Natural killer cell (primary cell): ENCODE measurements at regions of chr10 and their contacts with region 1.

Region 1: DNA sequence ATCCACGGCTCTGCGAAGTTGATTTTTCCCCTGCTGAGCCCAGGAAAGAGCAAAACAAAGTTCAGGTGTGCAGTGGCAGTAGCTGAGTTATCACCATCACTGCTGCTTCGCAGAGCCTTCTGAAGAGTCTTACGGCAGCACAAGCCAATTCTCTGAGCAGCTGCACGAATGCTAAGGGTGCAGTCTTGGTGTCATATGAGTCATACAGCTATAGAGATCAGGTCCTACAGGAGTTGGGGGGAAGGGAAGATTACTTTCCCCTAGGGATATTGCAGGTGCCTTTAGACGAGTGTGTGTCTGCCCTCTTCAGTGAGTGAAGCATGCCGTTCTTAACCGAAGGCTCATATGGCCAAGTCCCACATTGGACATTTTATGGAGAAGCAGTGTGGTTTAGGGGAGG is 227.8 kb downstream of the CELF2 start:
- DNase-seq: peak in 1 of 2 donors; percentile 33
- ATAC-seq: peak in 1 of 3 donors; percentile 41
- H3K4me3 ChIP-seq: no peak overlapping the region
- H3K4me3 Mint-ChIP-seq: no peak overlapping the region
- H3K27ac ChIP-seq: peak overlapping the region; percentile 69
- H3K27ac Mint-ChIP-seq: no peak overlapping the region
- H3K4me1 ChIP-seq: peaks cover 80% of the 10 kb centered on the region
- H3K4me1 Mint-ChIP-seq: peaks cover 17 to 60% of the 10 kb centered on the region in 2 donors
- H3K27me3 ChIP-seq: no peaks in the 10 kb centered on the region
- H3K27me3 Mint-ChIP-seq: no peaks in the 10 kb centered on the region
- CTCF ChIP-seq: no peak

Region 2: DNA sequence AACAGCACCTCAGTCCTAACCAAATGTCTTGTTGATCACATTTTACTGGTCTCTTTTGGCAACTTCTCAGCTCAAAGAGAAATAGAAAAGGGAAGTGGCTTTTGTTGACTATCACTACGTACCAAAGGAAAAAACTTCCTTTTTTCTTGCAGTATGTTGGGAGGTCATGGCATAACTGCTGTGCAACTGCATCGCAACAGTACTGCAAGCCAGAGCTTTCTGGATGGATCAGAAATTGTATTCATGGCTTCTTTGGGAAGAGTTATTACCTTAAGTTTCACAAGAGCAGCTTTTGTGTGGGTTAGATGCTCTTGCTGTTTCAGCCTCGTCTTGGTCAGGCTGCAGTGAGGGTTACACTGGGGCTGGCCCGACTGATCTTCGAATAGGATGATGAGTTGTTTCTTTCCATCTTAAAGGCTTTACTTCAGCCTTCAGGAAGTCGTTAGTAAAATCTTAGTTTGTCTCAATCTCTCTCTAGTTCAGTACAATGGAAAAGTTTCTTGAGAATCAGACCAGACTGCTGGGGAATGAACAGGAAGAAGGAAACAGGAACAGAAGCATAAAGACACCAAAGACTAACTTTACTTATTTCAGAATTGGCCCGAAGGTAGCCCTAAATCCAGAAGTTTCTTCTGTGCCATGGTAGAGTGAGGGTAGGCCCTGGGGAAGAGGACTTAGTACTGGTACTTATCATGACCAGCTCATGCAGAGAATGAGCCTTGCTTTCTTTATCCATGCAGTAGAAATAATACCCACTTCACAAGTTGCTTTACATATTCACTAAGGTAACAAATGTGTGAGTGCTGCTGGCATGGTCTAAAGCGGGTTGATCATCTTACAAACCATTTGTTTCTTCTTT is 74.3 kb before region 1 on chr10:
- intact Hi-C with region 1: loop called (anchors 2 kb)
- DNase-seq: peak in 1 of 2 donors; percentile 45
- ATAC-seq: peak; percentile 8 to 25 (median 19)
- H3K4me3 ChIP-seq: peak overlapping the region; percentile 93
- H3K4me3 Mint-ChIP-seq: no peak overlapping the region
- H3K27ac ChIP-seq: peak overlapping the region; percentile 86
- H3K27ac Mint-ChIP-seq: no peak overlapping the region
- H3K4me1 ChIP-seq: peaks cover 76% of the 10 kb centered on the region
- H3K4me1 Mint-ChIP-seq: peaks cover 6 to 48% of the 10 kb centered on the region in 2 donors
- H3K27me3 ChIP-seq: no peaks in the 10 kb centered on the region
- H3K27me3 Mint-ChIP-seq: no peaks in the 10 kb centered on the region
- CTCF ChIP-seq: no peak

Region 3: GRCh38 chr10:11230498-11231167 is 14.9 kb before region 1 on chr10:
- intact Hi-C with region 1: no loop called
- DNase-seq: no peak
- ATAC-seq: no peak
- H3K4me3 ChIP-seq: no peak overlapping the region
- H3K4me3 Mint-ChIP-seq: peak overlapping the region; percentile 4
- H3K27ac ChIP-seq: peak overlapping the region; percentile 70
- H3K27ac Mint-ChIP-seq: no peak overlapping the region
- H3K4me1 ChIP-seq: peaks cover 75% of the 10 kb centered on the region
- H3K4me1 Mint-ChIP-seq: peaks cover 92 to 95% of the 10 kb centered on the region in 2 donors
- H3K27me3 ChIP-seq: no peaks in the 10 kb centered on the region
- H3K27me3 Mint-ChIP-seq: no peaks in the 10 kb centered on the region
- CTCF ChIP-seq: no peak

Region 4: GRCh38 chr10:11730779-11731178 is 485.3 kb after region 1 on chr10:
- intact Hi-C with region 1: no loop called
- DNase-seq: no peak
- ATAC-seq: no peak
- H3K4me3 ChIP-seq: no peak overlapping the region
- H3K4me3 Mint-ChIP-seq: no peak overlapping the region
- H3K27ac ChIP-seq: no peak overlapping the region
- H3K27ac Mint-ChIP-seq: no peak overlapping the region
- H3K4me1 ChIP-seq: no peaks in the 10 kb centered on the region
- H3K4me1 Mint-ChIP-seq: no peaks in the 10 kb centered on the region
- H3K27me3 ChIP-seq: no peaks in the 10 kb centered on the region
- H3K27me3 Mint-ChIP-seq: no peaks in the 10 kb centered on the region
- CTCF ChIP-seq: no peak

Region 5: DNA sequence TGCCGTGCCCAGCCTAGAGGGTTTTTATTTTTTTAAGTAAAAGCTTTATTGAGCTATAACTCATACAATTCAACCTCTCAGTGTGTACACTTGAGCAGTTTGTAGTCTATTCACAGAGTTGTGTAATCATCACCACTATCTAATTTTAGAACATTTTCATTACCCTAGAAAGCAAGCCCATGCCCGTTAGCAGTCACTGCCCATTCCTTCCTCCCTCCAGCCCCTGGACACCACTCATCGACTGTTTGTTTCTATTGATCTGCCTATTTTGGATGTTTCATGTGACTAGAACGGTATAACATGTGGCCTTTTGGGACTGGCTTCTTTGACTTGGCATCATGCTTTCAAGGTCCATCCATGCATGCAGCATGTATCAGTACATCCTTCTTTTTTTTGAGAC is 858.3 kb after region 1 on chr10:
- intact Hi-C with region 1: no loop called
- DNase-seq: no peak
- ATAC-seq: no peak
- H3K4me3 ChIP-seq: no peak overlapping the region
- H3K4me3 Mint-ChIP-seq: no peak overlapping the region
- H3K27ac ChIP-seq: no peak overlapping the region
- H3K27ac Mint-ChIP-seq: no peak overlapping the region
- H3K4me1 ChIP-seq: no peaks in the 10 kb centered on the region
- H3K4me1 Mint-ChIP-seq: no peaks in the 10 kb centered on the region
- H3K27me3 ChIP-seq: no peaks in the 10 kb centered on the region
- H3K27me3 Mint-ChIP-seq: no peaks in the 10 kb centered on the region
- CTCF ChIP-seq: no peak